HEK293T (cell line): ENCODE measurements at regions of chr14 and their contacts with region 1.

Region 1: DNA sequence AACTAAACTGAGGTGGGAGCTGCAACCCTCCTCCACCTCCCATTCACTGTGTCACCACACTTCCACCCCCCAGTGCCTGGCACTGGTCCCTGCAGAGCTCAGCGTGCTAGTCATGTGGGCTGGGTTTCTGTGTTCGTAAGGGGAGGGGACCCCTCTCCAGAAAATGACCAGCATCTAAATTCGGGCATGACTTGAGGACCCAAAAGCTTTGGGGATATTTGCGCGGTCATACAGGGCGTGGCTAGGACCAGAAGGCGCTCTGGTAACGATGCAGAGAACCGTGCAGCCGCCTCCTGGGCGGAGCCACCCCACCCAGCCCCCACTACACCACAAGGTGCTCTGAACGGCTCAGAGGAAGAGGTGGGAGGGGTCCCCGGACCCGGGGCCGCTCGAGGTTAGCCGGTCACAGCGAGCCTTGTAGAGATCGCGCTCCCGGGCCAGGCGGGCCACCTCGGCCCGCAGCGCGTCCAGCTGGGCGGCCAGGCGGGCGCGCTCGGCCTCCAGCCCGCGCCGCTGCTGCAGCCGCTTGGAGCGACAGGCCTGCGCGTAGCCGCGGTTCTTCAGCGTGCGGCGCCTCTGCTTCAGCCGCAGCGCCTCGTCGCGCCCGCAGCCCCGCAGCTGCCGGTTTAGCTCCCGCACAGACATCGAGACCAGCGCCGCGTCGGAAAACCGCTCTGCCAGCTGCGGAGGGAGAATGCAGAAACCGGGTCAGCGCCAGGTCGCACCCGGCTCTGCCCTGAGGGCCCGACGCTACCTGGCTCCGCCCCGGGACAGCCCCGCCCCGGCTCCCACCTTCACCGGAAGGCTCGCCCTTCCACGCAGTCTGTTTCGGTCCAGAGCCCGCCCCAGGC is 9.8 kb downstream of the CPNE6 start:
- DNase-seq: peak; percentile 62

Region 2: GRCh38 chr14:24058260-24058950 is 22.7 kb before region 1 on chr14:
- CTCF ChIA-PET with region 1: interaction called, 13 read pairs
- POLR2A ChIA-PET with region 1: interaction called, 10 read pairs
- DNase-seq: peak; percentile 85